A673 (cell line): ENCODE measurements at regions of chr3 and their contacts with region 1.

Region 1: DNA sequence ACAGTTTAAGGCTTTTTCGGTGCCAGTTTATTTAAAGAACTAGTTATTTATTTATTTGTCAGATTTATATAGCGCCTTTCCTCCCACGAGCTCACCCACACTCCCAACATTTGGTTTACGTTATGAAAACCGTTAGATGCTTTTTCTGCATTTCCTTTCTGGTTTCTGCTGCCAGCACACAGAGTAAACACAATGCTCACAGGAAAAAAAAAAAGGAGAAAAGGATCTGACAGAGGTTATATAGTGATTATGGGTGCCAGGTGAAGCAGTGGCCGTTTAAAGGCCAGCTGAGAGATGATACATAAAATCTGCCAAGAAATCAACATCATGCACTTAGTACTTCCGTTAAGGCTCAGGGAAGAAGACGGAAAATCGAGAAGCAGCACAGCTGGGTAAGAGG is 37.9 kb downstream of the ETV5 start:
- DNase-seq: no peak
- H3K4me3 ChIP-seq: no peak overlapping the region
- H3K27ac ChIP-seq: no peak overlapping the region
- H3K4me1 ChIP-seq: no peaks in the 10 kb centered on the region
- H3K27me3 ChIP-seq: no peaks in the 10 kb centered on the region
- CTCF ChIP-seq: no peak

Region 2: GRCh38 chr3:185878920-185879319 is 192.1 kb before region 1 on chr3:
- CTCF ChIA-PET with region 1: no interaction called
- POLR2A ChIA-PET with region 1: no interaction called
- intact Hi-C with region 1: no loop called
- DNase-seq: no peak
- H3K4me3 ChIP-seq: no peak overlapping the region
- H3K27ac ChIP-seq: no peak overlapping the region
- H3K4me1 ChIP-seq: no peaks in the 10 kb centered on the region
- H3K27me3 ChIP-seq: no peaks in the 10 kb centered on the region
- CTCF ChIP-seq: no peak

Region 3: GRCh38 chr3:186152889-186153292 is 81.9 kb after region 1 on chr3:
- CTCF ChIA-PET with region 1: interaction called, 10 read pairs
- POLR2A ChIA-PET with region 1: no interaction called
- intact Hi-C with region 1: no loop called
- DNase-seq: no peak
- H3K4me3 ChIP-seq: no peak overlapping the region
- H3K27ac ChIP-seq: no peak overlapping the region
- H3K4me1 ChIP-seq: no peaks in the 10 kb centered on the region
- H3K27me3 ChIP-seq: no peaks in the 10 kb centered on the region
- CTCF ChIP-seq: no peak